ENCODE measurements at regions of chr21 and their contacts with region 1.

Region 1: DNA sequence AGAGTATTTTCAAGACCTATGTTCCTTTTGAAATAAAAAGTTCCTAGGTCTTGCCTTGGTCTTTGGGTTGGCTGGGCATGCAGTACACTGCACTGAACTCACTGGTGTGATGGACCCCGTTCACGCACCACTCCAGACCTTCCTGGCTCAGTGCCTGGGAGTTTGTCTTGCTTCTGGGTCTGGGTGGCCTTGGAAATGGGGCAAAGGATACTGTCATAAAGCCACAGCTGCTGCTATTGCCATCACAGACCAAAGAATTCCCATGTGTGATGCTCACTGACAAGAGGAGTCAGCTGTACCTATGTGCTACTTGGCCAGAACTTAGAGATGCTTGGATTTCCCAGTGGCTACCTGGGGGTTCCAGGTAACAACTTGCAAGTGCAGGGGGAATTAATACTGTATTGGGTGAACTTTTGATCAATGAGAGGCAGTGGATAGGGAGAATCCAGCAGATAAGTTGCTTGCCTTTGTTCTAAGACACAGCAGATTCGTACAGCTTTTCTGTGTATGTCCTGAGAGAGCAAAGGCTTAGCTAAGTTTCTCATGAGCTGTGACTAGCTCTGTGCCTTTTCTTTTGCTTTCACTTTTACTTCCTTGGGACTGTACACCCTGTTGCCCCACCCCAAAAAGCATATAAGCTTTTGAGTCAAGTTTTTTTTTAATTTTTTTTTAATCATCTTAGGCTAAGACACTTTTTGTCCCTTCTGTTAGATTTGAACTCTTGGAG is 115.3 kb downstream of the RUNX1 start:
- DNase-seq: peak; percentile 37
- H3K4me3 Mint-ChIP-seq: peak overlapping the region; percentile 72
- H3K27ac Mint-ChIP-seq: peak overlapping the region; percentile 91
- H3K4me1 Mint-ChIP-seq: peaks cover 83% of the 10 kb centered on the region
- H3K27me3 Mint-ChIP-seq: no peaks in the 10 kb centered on the region

Region 2: DNA sequence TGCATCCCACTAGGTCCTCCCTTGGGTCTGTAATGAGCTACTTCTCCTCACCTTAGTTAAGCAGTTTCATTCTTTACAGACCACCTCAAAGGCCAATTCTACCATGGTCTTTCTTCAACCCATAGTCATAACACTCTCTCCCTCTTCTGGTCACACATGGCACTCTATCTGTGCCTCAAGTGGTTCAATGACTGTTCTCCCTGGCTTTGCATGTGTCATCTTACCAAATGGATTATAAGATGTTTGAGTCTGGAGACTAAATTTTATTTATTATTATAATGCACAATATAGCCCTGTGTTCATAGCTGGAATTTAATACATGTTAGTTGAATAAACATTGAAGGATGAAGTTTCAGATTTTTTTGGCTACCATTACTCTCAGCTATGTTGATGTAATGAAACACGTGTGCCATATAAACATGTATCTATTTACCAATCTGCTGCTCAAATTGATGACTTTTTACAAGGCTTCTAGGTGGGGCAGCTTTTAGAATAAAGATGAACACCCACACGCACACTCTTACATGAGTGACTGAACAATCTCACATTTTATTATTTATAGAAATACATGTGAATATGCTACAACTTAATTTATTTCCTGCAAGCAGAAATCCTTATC is 13.3 kb after region 1 on chr21:
- intact Hi-C with region 1: loop called (anchors 1 kb)
- DNase-seq: no peak
- H3K4me3 Mint-ChIP-seq: no peak overlapping the region
- H3K27ac Mint-ChIP-seq: peak overlapping the region; percentile 83
- H3K4me1 Mint-ChIP-seq: peaks cover 80% of the 10 kb centered on the region
- H3K27me3 Mint-ChIP-seq: no peaks in the 10 kb centered on the region

Region 3: DNA sequence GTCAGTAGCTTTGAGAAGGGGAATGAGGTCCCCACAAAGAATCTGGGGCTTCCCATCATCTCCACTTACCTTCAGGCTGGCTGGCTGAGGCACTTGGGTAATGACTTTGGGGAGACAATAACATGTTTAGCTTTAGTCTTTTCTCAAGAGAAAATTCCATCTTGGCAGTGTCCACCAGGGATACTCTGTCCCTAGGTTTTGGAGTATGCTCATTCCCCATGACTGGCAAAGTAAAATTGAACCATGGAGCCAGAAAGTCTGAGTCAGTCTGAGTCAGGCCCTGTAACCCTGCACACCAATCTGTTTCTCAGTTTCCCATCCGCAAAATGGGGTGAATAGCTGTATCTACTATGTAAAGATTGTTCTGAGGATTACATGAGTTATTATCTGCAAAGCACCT is 87.1 kb after region 1 on chr21:
- intact Hi-C with region 1: loop called (anchors 5 kb)
- DNase-seq: no peak
- H3K4me3 Mint-ChIP-seq: no peak overlapping the region
- H3K27ac Mint-ChIP-seq: peak overlapping the region; percentile 87
- H3K4me1 Mint-ChIP-seq: peaks cover 86% of the 10 kb centered on the region
- H3K27me3 Mint-ChIP-seq: no peaks in the 10 kb centered on the region

Measured in activated T-helper 2 cell treated with anti-CD3 and anti-CD28 coated beads, Interferon-gamma antibody, Interleukin-2, Interleukin-4, amounts not matched to agents 10 μg/mL and 5 μg/mL and 100 μg/mL, durations not matched to agents 14 hours and 24 hours and 36 hours (primary cell).